PC-9 (cell line): ENCODE measurements at regions of chr2 and their contacts with region 1.

Region 1: GRCh38 chr2:224145751-224146355 is 106.8 kb upstream of the SERPINE2 start:
- DNase-seq: peak; percentile 36 to 51
- H3K4me3 ChIP-seq: no peak overlapping the region
- H3K27ac ChIP-seq: 0 out of 2 replicates have a peak overlapping the region, but pooled peaks have one; percentile 5
- H3K4me1 ChIP-seq: peaks cover 72% of the 10 kb centered on the region
- H3K27me3 ChIP-seq: no peaks in the 10 kb centered on the region
- CTCF ChIP-seq: no peak

Region 2: GRCh38 chr2:222655787-222656525 is 1489.9 kb before region 1 on chr2 and contains the start of gene FARSB:
- CTCF ChIA-PET with region 1: interaction called, 10 read pairs
- POLR2A ChIA-PET with region 1: no interaction called
- intact Hi-C with region 1: no loop called
- DNase-seq: peak; percentile 97 to 98
- H3K4me3 ChIP-seq: peak within 1 kb of the TSS; percentile 78
- H3K27ac ChIP-seq: peak within 1 kb of the TSS; percentile 45
- H3K4me1 ChIP-seq: peaks cover 27% of the 10 kb centered on the region
- H3K27me3 ChIP-seq: no peaks in the 10 kb centered on the region
- CTCF ChIP-seq: no peak
- total RNA-seq, gene FARSB: 37.5 and 50.2 TPM in 2 replicates

Region 3: GRCh38 chr2:224094413-224094812 is 51.4 kb before region 1 on chr2:
- CTCF ChIA-PET with region 1: no interaction called
- POLR2A ChIA-PET with region 1: no interaction called
- intact Hi-C with region 1: no loop called
- DNase-seq: no peak
- H3K4me3 ChIP-seq: no peak overlapping the region
- H3K27ac ChIP-seq: no peak overlapping the region
- H3K4me1 ChIP-seq: no peaks in the 10 kb centered on the region
- H3K27me3 ChIP-seq: no peaks in the 10 kb centered on the region
- CTCF ChIP-seq: no peak